ENCODE measurements at regions of chr1 and their contacts with region 1.

Region 1: DNA sequence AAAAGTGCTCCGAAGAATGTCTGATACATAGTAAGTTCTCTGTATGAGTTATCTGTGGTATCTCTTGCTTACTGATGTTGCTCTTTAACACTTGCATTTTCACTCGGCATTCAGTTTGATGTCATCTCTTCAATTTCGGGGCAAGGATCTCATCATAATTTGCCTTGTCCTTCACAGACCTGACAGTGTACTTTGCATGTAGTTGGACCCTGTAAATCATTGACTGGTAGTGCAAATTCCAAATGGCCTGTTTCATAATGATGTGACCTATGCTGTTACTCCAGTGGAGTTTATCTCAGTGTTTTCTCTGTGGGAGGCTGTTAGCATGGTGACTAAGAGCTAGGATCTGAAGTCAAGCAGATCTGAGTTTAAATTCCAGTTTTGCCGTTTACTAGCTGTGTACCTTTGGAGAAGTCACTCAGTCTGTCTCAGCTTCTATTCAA is 34.2 kb upstream of the ABCD3 start:
- DNase-seq: peak; percentile 48
- H3K4me3 Mint-ChIP-seq: peak overlapping the region; percentile 5
- H3K27ac Mint-ChIP-seq: peak overlapping the region; percentile 85
- H3K4me1 Mint-ChIP-seq: peaks cover 32% of the 10 kb centered on the region
- H3K27me3 Mint-ChIP-seq: peaks cover 4% of the 10 kb centered on the region

Region 2: DNA sequence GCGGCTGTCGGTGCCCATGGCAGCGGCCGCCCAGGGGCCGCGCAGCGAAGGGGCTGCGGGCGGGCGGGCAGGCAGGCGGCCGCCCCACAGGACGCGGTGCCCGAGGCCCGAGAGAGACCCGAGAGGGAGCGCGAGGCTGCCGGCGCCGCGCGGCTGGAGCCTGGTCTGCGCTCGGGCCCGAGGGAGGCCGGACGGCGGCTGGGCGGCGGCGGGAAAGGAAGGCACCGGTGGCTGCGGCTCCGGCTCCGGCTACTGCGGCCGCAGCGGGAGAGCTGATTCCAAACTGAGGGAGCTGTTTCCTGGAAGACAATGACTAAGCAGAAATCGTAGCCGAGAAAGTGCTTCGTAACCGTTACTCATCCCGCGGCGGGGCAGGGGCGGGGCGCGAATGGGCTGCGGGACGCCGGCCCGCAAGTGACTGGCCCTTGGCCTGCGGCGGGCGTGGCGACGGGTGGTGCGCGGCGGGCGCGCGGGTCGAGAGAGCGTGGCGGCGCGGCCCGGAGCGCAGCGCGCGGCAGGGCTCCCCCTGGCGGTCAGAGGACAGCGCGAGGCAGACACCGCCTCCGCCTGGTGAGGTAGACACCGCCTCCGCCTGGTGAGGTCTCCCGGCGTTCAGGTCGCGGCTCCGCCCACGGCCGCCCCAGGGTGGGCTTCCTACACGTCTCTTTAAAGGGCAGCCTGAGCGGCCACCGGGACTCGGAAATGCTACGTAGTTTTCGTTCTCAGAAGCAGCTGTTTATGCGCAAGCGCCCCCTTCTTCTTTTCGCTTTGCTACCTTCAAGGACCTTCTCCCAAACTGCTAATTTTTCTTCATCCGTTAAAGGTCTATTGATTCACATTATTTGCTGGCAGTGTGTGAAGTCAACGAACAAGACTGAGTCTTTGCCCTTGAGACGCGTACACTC is 474.6 kb before region 1 on chr1 and contains the start of gene GCLM:
- CTCF ChIA-PET with region 1: no interaction called
- intact Hi-C with region 1: loop called (anchors 1 kb)
- DNase-seq: peak; percentile 88
- H3K4me3 Mint-ChIP-seq: peak within 1 kb of the TSS; percentile 82
- H3K27ac Mint-ChIP-seq: peak within 1 kb of the TSS; percentile 87
- H3K4me1 Mint-ChIP-seq: peaks cover 27% of the 10 kb centered on the region
- H3K27me3 Mint-ChIP-seq: no peaks in the 10 kb centered on the region
- total RNA-seq, gene GCLM: 19.5 to 22.7 TPM

Region 3: GRCh38 chr1:94033849-94034248 is 350.1 kb before region 1 on chr1:
- CTCF ChIA-PET with region 1: no interaction called
- intact Hi-C with region 1: loop called (anchors 1 kb)
- DNase-seq: no peak
- H3K4me3 Mint-ChIP-seq: no peak overlapping the region
- H3K27ac Mint-ChIP-seq: no peak overlapping the region
- H3K4me1 Mint-ChIP-seq: peaks cover 15% of the 10 kb centered on the region
- H3K27me3 Mint-ChIP-seq: peaks cover 20% of the 10 kb centered on the region

Region 4: GRCh38 chr1:94362466-94363058 is 21.4 kb before region 1 on chr1:
- CTCF ChIA-PET with region 1: no interaction called
- intact Hi-C with region 1: loop called (anchors 1 kb)
- DNase-seq: no peak
- H3K4me3 Mint-ChIP-seq: no peak overlapping the region
- H3K27ac Mint-ChIP-seq: no peak overlapping the region
- H3K4me1 Mint-ChIP-seq: peaks cover 6% of the 10 kb centered on the region
- H3K27me3 Mint-ChIP-seq: peaks cover 10% of the 10 kb centered on the region

Region 5: DNA sequence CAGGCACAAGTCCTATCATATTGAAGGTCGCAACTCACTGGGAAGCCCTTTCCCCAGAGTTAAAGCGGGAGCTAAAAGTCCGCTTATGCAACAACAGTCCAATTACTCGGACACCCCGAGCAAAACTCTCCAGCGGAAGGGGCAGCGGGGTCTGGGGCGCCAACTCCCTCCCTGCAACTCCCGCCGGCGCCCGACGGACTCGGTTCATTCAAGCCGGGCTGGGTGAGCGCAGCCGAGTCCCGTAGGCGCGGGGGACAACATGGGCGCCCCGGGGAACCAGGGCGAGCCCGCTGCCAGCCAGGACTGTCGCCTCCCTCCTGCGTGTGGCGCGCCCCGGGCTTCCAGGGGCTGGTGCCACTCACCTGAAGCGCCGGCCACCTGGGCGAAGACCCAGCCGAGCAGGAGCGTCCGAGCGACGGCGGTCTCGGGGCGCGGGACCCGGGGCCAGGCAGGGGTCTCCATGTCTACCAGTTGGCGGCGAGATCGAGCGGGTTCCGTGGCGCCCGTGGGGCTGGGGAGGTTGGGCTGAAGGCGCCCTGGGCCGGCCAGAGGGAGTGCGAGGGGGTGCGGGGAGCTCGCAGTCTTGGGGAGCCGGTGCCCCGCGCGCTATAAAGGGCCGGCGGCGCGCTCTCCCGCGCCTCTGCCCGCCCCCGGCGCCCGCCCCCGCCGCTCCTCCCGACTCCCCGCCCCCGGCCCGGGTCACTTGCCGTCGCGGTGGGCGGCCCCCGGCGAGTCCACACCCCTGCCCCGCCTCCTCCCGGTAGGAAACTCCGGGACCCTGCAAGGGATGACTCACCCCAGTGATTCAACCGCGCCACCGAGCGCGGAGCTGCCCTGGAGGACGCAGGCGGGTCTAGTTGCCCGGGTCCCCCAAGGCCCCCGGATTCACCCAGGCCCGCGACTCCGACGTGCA is 157.4 kb after region 1 on chr1 and contains the start of gene F3:
- CTCF ChIA-PET with region 1: no interaction called
- intact Hi-C with region 1: loop called (anchors 1 kb)
- DNase-seq: peak; percentile 89
- H3K4me3 Mint-ChIP-seq: peak within 1 kb of the TSS; percentile 72
- H3K27ac Mint-ChIP-seq: no peak within 1 kb of the TSS
- H3K4me1 Mint-ChIP-seq: peaks cover 14% of the 10 kb centered on the region
- H3K27me3 Mint-ChIP-seq: peaks cover 63% of the 10 kb centered on the region
- total RNA-seq, gene F3: 0.10 TPM in 1 of 2 experiments, not detected in the other